ENCODE measurements at regions of chr13 and their contacts with region 1.

Region 1: GRCh38 chr13:87524775-87525174 is 146.4 kb upstream of the SLITRK5 start:
- DNase-seq: no peak
- H3K4me3 ChIP-seq: no peak overlapping the region
- H3K27ac ChIP-seq: no peak overlapping the region
- H3K4me1 ChIP-seq: no peaks in the 10 kb centered on the region
- H3K27me3 ChIP-seq: no peaks in the 10 kb centered on the region
- CTCF ChIP-seq: no peak

Region 2: DNA sequence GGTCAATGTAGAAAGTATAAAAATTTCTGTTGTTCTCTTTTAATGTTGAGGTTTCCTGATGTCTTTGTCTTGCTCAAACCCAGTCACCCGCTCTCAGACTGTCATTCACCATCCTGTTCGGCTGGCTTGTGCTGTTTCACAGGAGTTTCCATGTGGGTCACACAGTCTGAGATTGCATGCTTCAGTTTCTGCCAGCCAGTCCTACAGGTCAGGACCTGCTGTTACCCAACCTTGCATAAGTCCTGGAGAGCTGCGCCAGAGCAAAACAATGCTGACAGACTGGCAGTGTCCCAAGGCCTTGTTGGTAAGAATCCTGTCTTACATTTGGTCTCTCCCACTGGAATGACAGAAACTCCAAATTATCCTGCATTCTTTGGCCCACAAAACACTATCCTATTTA is 193.6 kb before region 1 on chr13:
- intact Hi-C with region 1: no loop called
- DNase-seq: no peak
- H3K4me3 ChIP-seq: no peak overlapping the region
- H3K27ac ChIP-seq: no peak overlapping the region
- H3K4me1 ChIP-seq: no peaks in the 10 kb centered on the region
- H3K27me3 ChIP-seq: no peaks in the 10 kb centered on the region
- CTCF ChIP-seq: no peak

Region 3: GRCh38 chr13:87459419-87459818 is 65.4 kb before region 1 on chr13:
- intact Hi-C with region 1: no loop called
- DNase-seq: no peak
- H3K4me3 ChIP-seq: no peak overlapping the region
- H3K27ac ChIP-seq: no peak overlapping the region
- H3K4me1 ChIP-seq: no peaks in the 10 kb centered on the region
- H3K27me3 ChIP-seq: no peaks in the 10 kb centered on the region
- CTCF ChIP-seq: no peak

Region 4: DNA sequence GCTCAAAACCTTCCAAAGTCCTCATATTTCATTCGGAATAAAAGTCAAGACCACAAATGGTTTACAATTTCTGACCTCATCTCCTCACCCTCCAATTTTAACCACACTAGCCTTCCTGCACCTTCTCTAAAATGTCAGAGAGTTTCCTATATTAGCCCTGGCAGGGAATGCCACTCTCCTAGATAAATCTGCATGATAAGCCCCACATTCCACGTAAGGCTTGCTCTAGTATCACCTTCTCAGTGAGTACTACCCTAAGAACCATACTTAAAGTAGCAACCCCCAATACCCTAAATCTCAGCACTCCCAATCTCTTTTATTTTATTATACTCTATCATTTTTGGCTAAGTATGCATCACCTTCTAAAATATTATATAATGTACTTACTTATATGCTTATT is 45.9 kb after region 1 on chr13:
- intact Hi-C with region 1: no loop called
- DNase-seq: no peak
- H3K4me3 ChIP-seq: no peak overlapping the region
- H3K27ac ChIP-seq: no peak overlapping the region
- H3K4me1 ChIP-seq: no peaks in the 10 kb centered on the region
- H3K27me3 ChIP-seq: no peaks in the 10 kb centered on the region
- CTCF ChIP-seq: no peak

Region 5: GRCh38 chr13:87709947-87710346 is 185.2 kb after region 1 on chr13:
- intact Hi-C with region 1: loop called (anchors 5 kb)
- DNase-seq: no peak
- H3K4me3 ChIP-seq: no peak overlapping the region
- H3K27ac ChIP-seq: no peak overlapping the region
- H3K4me1 ChIP-seq: no peaks in the 10 kb centered on the region
- H3K27me3 ChIP-seq: no peaks in the 10 kb centered on the region
- CTCF ChIP-seq: no peak

Measured in tibial artery (tissue), 4 donors.